ENCODE measurements at regions of chr11 and their contacts with region 1.

Region 1: DNA sequence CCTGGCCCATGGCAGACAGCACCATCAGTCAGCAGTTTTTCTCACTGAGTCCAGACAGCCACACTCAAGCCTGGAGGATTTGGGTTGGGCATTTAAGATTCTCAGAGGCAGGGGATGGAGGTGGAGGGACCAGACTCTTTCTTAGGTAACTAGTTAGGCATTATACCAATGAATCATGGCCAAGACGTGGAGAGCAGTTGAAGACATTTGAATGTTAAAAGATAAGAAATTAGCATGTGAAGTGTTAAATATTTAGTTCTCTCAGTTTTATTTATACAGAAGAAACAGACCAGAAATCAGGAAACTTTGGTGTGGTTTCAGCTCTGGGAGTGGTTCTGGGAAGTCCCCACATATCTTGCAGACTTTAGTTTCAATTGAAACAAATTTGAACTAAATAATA is 9.9 kb downstream of the GTF2H1 start:
- DNase-seq: no peak
- ATAC-seq: peak; percentile 39
- H3K4me3 Mint-ChIP-seq: peak overlapping the region; percentile 66
- H3K27ac Mint-ChIP-seq: peak overlapping the region; percentile 88
- H3K4me1 Mint-ChIP-seq: peaks cover 42% of the 10 kb centered on the region
- H3K27me3 Mint-ChIP-seq: no peaks in the 10 kb centered on the region
- CTCF ChIP-seq: no peak

Region 2: GRCh38 chr11:18310800-18311340 is 21.4 kb before region 1 on chr11:
- CTCF ChIA-PET with region 1: no interaction called
- POLR2A ChIA-PET with region 1: interaction called, 3 read pairs
- intact Hi-C with region 1: loop called (anchors 1 kb)
- DNase-seq: no peak
- ATAC-seq: peak; percentile 83
- H3K4me3 Mint-ChIP-seq: peak overlapping the region; percentile 55
- H3K27ac Mint-ChIP-seq: peak overlapping the region; percentile 76
- H3K4me1 Mint-ChIP-seq: peaks cover 38% of the 10 kb centered on the region
- H3K27me3 Mint-ChIP-seq: no peaks in the 10 kb centered on the region
- CTCF ChIP-seq: no peak

Measured in activated B cell treated with CpG ODN at 0.5 μM for 24 hours (primary cell).